Naive thymus-derived CD4-positive, alpha-beta T cell (primary cell): ENCODE measurements at regions of chr11 and their contacts with region 1.

Region 1: GRCh38 chr11:96207459-96208449 is 135.2 kb downstream of the MAML2 start:
- DNase-seq: peak in 7 of 9 donors; percentile 43 to 73 (median 57)
- ATAC-seq: peak; percentile 70
- H3K4me3 ChIP-seq: peak overlapping the region; percentile 9
- H3K4me3 Mint-ChIP-seq: peak overlapping the region; percentile 51 to 84 (median 74)
- H3K27ac ChIP-seq: peak overlapping the region; percentile 62
- H3K27ac Mint-ChIP-seq: peak overlapping the region; percentile 86 to 99 (median 95)
- H3K4me1 ChIP-seq: peaks cover 70 to 93% of the 10 kb centered on the region in 2 donors
- H3K4me1 Mint-ChIP-seq: peaks cover 45 to 96% (median 92%) of the 10 kb centered on the region in 7 donors
- H3K27me3 ChIP-seq: no peaks in the 10 kb centered on the region
- H3K27me3 Mint-ChIP-seq: no peaks in the 10 kb centered on the region

Region 2: GRCh38 chr11:95682552-95682951 is 525.2 kb before region 1 on chr11:
- CTCF ChIA-PET with region 1: no interaction called
- POLR2A ChIA-PET with region 1: no interaction called
- intact Hi-C with region 1: no loop called
- DNase-seq: peak in 1 of 9 donors; percentile 51
- ATAC-seq: no peak
- H3K4me3 ChIP-seq: no peak overlapping the region
- H3K4me3 Mint-ChIP-seq: peak overlapping the region in 5 of 10 donors; percentile 8 to 47 (median 42)
- H3K27ac ChIP-seq: no peak overlapping the region
- H3K27ac Mint-ChIP-seq: peak overlapping the region in 6 of 9 donors; percentile 3 to 86 (median 54)
- H3K4me1 ChIP-seq: peaks cover 1 to 59% of the 10 kb centered on the region in 2 donors
- H3K4me1 Mint-ChIP-seq: peaks cover 24 to 87% (median 84%) of the 10 kb centered on the region in 7 donors
- H3K27me3 ChIP-seq: no peaks in the 10 kb centered on the region
- H3K27me3 Mint-ChIP-seq: no peaks in the 10 kb centered on the region

Region 3: DNA sequence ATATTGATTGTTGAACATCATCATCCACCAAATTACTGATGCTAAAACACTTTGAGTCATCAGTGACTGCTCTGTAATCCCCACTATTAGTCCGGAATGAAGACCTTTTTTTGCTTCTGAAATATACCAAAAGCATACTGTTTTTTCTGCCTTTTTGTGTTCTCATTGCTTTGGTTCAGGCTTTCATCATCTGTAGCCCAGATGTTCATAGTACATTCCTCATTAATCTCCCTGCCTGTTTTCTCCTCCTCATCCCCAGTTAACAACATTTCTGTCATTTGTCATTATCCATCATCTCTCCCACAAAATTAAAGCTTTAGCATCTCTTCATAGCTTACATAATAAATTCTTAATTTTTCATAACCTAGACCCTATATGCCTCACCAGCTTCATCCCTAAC is 408.2 kb before region 1 on chr11:
- CTCF ChIA-PET with region 1: no interaction called
- POLR2A ChIA-PET with region 1: no interaction called
- intact Hi-C with region 1: no loop called
- DNase-seq: no peak
- ATAC-seq: no peak
- H3K4me3 ChIP-seq: no peak overlapping the region
- H3K4me3 Mint-ChIP-seq: no peak overlapping the region
- H3K27ac ChIP-seq: no peak overlapping the region
- H3K27ac Mint-ChIP-seq: no peak overlapping the region
- H3K4me1 ChIP-seq: no peaks in the 10 kb centered on the region
- H3K4me1 Mint-ChIP-seq: peaks cover 10 to 29% (median 26%) of the 10 kb centered on the region in 7 donors
- H3K27me3 ChIP-seq: no peaks in the 10 kb centered on the region
- H3K27me3 Mint-ChIP-seq: no peaks in the 10 kb centered on the region

Region 4: DNA sequence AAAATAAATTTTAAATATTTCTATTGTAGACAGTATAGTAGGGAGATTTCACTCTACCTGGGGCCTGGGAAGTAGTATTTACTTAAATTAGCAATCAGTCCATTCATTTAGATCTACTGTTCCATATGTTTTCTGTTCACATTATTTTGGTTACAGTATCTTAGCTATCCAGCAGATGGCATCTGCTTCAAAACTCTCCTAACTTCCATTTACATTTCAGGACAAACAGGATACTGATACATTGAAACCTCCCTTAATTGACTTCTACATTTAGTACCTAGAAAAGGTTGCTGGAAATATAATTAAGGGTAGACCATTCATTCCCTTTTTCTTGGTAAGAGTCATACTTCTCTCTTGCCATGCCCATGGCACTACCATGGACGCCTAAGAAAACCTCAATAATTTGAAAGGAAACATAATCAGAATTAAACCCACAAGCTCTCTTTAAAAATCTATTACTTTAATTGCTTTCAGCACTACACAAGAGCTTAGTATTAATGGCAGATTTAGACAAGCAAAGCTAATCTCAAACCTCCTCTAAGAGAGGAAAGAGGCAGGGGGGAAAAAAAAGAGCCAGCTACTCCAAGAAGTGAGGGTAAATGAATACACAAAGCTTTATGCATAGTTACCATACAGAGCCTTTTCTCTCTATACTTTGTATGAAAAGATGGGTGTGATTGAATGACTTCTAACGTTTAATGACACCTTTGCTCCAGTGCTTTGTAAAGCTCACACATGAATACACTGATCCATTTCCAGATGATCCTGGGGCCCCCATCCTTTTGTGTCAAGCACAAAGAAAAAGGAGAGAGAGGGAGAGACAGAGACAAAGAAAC is 152.7 kb before region 1 on chr11:
- CTCF ChIA-PET with region 1: no interaction called
- POLR2A ChIA-PET with region 1: no interaction called
- intact Hi-C with region 1: loop called in 1 of 2 experiments (anchors 5 kb)
- DNase-seq: peak in 5 of 9 donors; percentile 15 to 41 (median 29)
- ATAC-seq: peak; percentile 72
- H3K4me3 ChIP-seq: no peak overlapping the region
- H3K4me3 Mint-ChIP-seq: peak overlapping the region in 4 of 10 donors; percentile 4 to 63 (median 32)
- H3K27ac ChIP-seq: no peak overlapping the region
- H3K27ac Mint-ChIP-seq: peak overlapping the region in 8 of 9 donors; percentile 15 to 88 (median 70)
- H3K4me1 ChIP-seq: peaks cover 0 to 16% of the 10 kb centered on the region in 2 donors
- H3K4me1 Mint-ChIP-seq: peaks cover 18 to 89% (median 77%) of the 10 kb centered on the region in 7 donors
- H3K27me3 ChIP-seq: no peaks in the 10 kb centered on the region
- H3K27me3 Mint-ChIP-seq: no peaks in the 10 kb centered on the region

Region 5: DNA sequence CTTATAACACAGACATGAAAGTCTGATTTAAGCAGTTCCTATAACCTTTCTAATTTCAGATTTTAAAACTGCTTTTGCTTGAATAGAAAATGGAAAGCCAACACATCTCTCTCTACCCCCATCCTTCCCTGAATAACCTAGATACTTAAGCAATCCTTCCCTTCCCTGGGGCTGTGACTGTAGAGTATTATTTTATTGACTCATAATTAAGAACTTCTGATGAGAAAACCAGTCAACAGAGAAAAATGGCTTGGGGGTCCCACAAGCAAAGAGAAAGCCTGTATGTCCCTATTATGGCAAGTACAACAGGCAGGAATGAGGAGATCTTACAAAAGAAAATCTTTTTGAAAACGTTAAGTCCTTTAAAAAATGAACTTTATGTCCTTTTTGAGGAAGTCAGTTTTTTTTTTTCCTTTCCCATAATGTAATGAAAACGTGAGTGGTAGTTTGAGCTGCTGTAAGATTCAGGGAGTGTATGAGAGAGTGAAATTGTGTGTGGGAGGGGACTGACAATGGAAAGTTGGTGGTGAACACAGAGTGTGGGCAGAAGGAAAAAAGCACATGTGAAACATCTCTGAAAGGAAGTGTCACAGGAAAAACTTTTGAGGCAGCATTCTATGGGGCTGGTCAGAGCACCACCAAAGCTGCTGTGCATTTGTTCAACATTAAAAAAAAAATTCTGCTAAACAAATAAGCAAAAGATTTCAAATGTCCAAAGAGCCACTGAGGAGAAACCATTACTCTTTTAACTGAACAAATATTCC is 19.3 kb before region 1 on chr11:
- CTCF ChIA-PET with region 1: no interaction called
- POLR2A ChIA-PET with region 1: interaction called, 4 read pairs
- intact Hi-C with region 1: loop called in 1 of 2 experiments (anchors 2 kb)
- DNase-seq: peak in 2 of 9 donors; percentile 17 to 57
- ATAC-seq: peak; percentile 38
- H3K4me3 ChIP-seq: no peak overlapping the region
- H3K4me3 Mint-ChIP-seq: peak overlapping the region; percentile 42 to 79 (median 72)
- H3K27ac ChIP-seq: peak overlapping the region; percentile 15
- H3K27ac Mint-ChIP-seq: peak overlapping the region; percentile 21 to 90 (median 79)
- H3K4me1 ChIP-seq: peaks cover 9 to 50% of the 10 kb centered on the region in 2 donors
- H3K4me1 Mint-ChIP-seq: peaks cover 35 to 92% (median 88%) of the 10 kb centered on the region in 7 donors
- H3K27me3 ChIP-seq: no peaks in the 10 kb centered on the region
- H3K27me3 Mint-ChIP-seq: no peaks in the 10 kb centered on the region

Region 6: GRCh38 chr11:96235751-96236150 is 28.0 kb after region 1 on chr11:
- CTCF ChIA-PET with region 1: no interaction called
- POLR2A ChIA-PET with region 1: interaction called, 5 read pairs
- intact Hi-C with region 1: loop called (anchors 1 to 5 kb)
- DNase-seq: peak in 1 of 9 donors; percentile 64
- ATAC-seq: peak; percentile 57
- H3K4me3 ChIP-seq: no peak overlapping the region
- H3K4me3 Mint-ChIP-seq: peak overlapping the region in 8 of 10 donors; percentile 9 to 70 (median 39)
- H3K27ac ChIP-seq: peak overlapping the region; percentile 6
- H3K27ac Mint-ChIP-seq: peak overlapping the region in 6 of 9 donors; percentile 38 to 83 (median 64)
- H3K4me1 ChIP-seq: peaks cover 0 to 53% of the 10 kb centered on the region in 2 donors
- H3K4me1 Mint-ChIP-seq: peaks cover 20 to 40% (median 28%) of the 10 kb centered on the region in 7 donors
- H3K27me3 ChIP-seq: no peaks in the 10 kb centered on the region
- H3K27me3 Mint-ChIP-seq: no peaks in the 10 kb centered on the region

Region 7: GRCh38 chr11:96272529-96273222 is 64.9 kb after region 1 on chr11:
- CTCF ChIA-PET with region 1: no interaction called
- POLR2A ChIA-PET with region 1: no interaction called
- intact Hi-C with region 1: no loop called
- DNase-seq: peak in 7 of 9 donors; percentile 37 to 74 (median 65)
- ATAC-seq: peak; percentile 87
- H3K4me3 ChIP-seq: no peak overlapping the region
- H3K4me3 Mint-ChIP-seq: peak overlapping the region in 3 of 10 donors; percentile 6 to 60 (median 24)
- H3K27ac ChIP-seq: peak overlapping the region; percentile 69
- H3K27ac Mint-ChIP-seq: peak overlapping the region in 8 of 9 donors; percentile 66 to 100 (median 90)
- H3K4me1 ChIP-seq: peaks cover 6 to 15% of the 10 kb centered on the region in 2 donors
- H3K4me1 Mint-ChIP-seq: peaks cover 16 to 82% (median 76%) of the 10 kb centered on the region in 7 donors
- H3K27me3 ChIP-seq: no peaks in the 10 kb centered on the region
- H3K27me3 Mint-ChIP-seq: no peaks in the 10 kb centered on the region

Region 8: GRCh38 chr11:96863520-96863919 is 655.8 kb after region 1 on chr11:
- CTCF ChIA-PET with region 1: no interaction called
- POLR2A ChIA-PET with region 1: no interaction called
- intact Hi-C with region 1: no loop called
- DNase-seq: no peak
- ATAC-seq: no peak
- H3K4me3 ChIP-seq: no peak overlapping the region
- H3K4me3 Mint-ChIP-seq: no peak overlapping the region
- H3K27ac ChIP-seq: no peak overlapping the region
- H3K27ac Mint-ChIP-seq: no peak overlapping the region
- H3K4me1 ChIP-seq: no peaks in the 10 kb centered on the region
- H3K4me1 Mint-ChIP-seq: no peaks in the 10 kb centered on the region
- H3K27me3 ChIP-seq: no peaks in the 10 kb centered on the region
- H3K27me3 Mint-ChIP-seq: no peaks in the 10 kb centered on the region